ENCODE measurements at regions of chr17 and their contacts with region 1.

Region 1: GRCh38 chr17:80426681-80427326 is 11.8 kb downstream of the ENDOV start:
- DNase-seq: peak; percentile 85
- ATAC-seq: peak; percentile 78

Region 2: DNA sequence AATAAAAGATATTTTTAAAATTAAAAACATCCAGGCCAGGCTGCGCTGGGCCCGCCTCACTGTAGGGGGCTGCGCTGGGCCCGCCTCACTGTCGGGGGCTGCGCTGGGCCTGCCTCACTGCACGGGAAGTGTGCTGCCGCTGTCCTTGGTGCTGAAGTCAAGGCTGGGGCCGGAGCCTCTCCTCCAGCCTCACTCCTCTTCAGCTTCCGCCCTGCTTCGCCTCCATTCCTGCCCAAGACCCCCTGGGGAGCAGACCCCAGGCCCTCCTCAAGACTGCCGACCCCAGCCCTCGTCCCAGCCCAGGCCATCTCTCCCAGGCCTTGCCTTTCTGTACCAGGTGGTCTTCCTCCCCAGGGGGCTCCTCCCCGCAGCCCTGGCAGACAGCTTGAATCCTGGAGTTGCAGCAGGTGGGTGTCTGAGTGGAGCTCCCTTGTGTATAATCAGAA is 14.4 kb after region 1 on chr17:
- intact Hi-C with region 1: no loop called
- DNase-seq: no peak
- ATAC-seq: no peak

Region 3: DNA sequence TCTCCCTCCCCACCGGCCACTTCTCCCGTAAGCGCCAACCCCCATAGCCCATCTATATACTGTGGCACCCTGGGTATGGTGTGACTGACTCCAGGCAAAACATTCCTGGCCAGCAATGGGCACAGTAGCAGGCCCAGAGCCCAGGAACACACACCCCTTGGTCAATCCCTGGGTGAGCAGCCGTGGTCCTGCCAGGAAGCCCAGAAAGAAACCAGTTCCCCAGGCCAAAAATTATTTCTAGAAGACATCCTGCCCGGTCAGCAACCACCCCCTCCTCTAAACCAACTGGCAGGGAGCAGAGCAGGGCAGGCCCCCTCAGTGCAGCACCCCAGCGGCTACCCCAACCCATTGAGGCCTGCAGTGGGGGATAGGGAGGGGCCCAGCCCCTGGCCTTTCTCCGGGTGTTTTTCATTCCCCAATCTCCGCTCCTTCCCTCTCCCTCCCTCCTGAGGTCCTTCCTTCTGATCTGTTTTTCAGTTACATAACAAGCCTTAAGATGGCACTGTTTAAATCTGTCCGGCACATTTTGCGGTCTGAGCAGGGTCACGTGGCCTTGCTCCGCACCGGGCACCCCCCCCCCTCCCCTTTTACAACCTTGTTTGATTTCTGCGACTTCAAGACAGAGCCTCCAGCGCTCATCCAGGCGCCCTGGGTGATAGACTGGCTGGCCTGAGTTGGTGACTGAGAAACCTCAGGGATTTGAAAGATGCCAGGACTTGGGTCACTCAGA is 47.6 kb after region 1 on chr17:
- intact Hi-C with region 1: no loop called
- DNase-seq: no peak
- ATAC-seq: no peak

Region 4: GRCh38 chr17:80575057-80575875 is 148.5 kb after region 1 on chr17:
- intact Hi-C with region 1: loop called (anchors 2 kb)
- DNase-seq: peak; percentile 92
- ATAC-seq: peak; percentile 52

Region 5: DNA sequence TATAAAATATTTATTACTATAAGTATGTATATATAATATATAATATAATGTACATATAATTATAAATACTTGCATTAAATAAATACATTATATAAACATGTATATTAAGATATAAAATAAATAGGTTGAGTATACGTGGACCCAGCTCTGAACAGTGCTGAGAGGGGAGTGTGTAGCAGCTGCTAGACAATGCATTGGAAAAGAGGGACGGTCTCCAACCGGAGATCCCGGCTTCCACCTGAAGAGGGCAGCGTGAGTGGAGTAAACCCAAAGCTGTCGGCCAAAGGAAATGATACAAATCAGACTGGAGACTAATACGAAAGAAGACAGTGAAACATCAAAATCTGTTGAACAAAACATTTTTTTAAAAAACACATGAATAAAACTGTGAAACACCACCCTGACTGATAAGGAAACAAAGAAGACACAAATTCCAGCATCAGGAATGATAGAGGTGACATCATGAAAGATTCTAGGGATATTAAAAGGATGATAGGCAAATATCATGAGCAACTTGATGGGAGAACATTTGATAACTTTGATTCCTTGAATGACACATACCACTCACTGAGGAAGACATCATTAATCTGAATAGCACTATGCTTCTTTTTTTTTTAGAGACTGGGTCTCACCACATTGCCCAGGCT is 439.5 kb after region 1 on chr17:
- intact Hi-C with region 1: loop called (anchors 10 kb)
- DNase-seq: peak; percentile 72
- ATAC-seq: peak; percentile 63

Region 6: GRCh38 chr17:80981062-80981902 is 554.5 kb after region 1 on chr17:
- intact Hi-C with region 1: loop called (anchors 2 kb)
- DNase-seq: no peak
- ATAC-seq: no peak

Region 7: DNA sequence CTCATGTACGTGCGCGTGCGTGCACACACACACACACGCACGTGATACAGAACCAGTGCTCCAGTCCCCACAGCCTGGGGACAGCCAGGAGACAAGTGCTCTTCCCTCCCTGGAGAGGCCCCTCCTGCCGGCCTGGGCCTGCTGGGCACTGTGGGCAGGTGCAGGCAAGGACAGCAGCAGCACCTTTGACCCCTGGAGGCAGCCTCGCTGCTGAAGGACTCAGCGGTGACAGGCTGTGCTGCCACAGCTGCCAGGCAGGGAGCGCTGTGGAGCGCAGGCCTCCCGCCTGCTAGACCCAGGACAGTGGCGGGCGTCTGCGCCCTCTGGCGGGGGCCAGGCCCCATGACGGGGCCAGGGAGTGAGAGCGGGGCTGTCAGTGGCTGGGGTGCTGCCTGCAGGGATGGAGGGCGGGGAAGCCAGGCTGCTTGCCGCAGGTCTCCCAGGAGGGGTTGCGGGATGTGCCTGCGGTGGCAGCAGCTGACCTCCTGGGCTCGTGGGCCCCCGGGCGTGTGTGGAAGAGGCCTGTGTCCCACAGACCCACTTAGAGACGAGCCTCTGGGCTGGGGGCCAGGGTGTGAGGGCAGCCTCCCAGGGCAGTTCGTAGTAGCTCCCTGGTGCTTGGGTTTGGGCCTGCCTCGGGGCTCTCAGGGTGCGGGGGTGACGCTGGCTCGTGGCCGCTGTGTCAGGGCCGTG is 675.0 kb after region 1 on chr17:
- intact Hi-C with region 1: loop called (anchors 10 kb)
- DNase-seq: peak; percentile 94
- ATAC-seq: peak; percentile 85